IMR-90 (cell line): ENCODE measurements at regions of chr1 and their contacts with region 1.

Region 1: DNA sequence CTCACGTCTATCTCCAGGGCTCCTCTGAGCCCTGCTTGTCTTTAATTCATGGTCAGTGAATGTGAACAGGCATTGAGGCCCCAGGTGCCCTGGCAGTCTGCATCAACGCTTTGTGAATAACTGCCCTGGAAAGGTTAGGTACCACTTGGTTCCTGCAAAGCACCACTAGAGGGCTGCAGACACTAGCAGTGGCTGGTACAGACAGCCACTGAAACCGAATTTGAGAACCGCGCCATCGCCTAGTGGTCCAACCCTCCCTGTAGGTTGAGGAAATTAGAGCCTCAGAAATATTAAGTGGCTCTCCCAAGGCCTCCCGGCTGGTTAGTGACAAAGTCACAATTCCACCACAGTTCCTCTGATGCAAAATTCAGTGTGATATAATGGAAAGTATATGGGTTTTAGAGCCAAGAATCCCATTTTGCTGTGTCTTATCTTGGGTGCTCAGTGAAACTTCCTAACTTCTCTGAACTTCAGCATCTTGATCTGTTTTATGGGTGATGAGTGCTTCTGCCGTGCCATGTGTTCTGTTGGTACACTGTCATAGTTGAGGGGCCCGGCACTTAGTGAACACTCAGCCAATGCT is 46.2 kb upstream of the BCL9 start:
- DNase-seq: peak; percentile 77
- ATAC-seq: peak; percentile 94
- H3K4me3 ChIP-seq: no peak overlapping the region
- H3K27ac ChIP-seq: no peak overlapping the region
- H3K4me1 ChIP-seq: no peaks in the 10 kb centered on the region
- H3K27me3 ChIP-seq: peaks cover 2% of the 10 kb centered on the region
- CTCF ChIP-seq: peak; percentile 99
- POLR2A ChIP-seq: peak; percentile 51
- RAD21 ChIP-seq: peak; percentile 100

Region 2: DNA sequence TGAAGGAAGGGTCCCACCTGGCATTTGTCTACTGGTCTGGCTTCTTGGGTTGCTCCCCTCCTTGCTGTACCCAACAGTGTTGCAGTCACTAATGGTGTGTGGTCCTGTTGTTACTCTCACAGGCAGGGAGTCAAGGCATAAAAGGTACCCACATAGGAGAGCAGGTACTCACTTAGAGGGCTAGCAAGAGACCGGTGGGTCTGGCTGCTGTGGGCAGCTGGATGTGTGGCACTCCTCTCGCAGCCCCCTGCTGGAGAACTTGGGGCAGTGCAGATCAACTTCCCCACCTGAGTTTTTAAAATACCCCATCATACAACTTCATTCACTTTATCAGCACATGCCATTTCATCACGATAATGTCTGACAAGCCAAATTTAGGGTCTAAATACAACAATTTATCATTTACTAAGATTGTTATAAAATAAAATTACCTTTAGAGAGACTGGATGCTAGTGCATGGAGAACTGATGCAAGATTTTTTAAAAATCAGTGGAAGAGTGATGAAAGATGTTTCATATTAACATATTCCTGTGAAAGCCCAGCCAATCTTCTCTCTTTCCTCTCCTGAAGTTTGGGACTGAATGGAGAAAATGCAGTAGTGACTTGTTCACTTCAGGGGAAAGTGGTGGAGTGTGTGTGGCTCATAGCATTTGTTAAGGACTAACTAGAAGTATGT is 132.5 kb after region 1 on chr1:
- CTCF ChIA-PET with region 1: interaction called, 6 read pairs
- POLR2A ChIA-PET with region 1: no interaction called
- dilution Hi-C with region 1: no loop called
- in situ Hi-C with region 1: no loop called
- intact Hi-C with region 1: loop called (anchors 1 kb)
- DNase-seq: peak; percentile 44
- ATAC-seq: peak; percentile 93
- H3K4me3 ChIP-seq: no peak overlapping the region
- H3K27ac ChIP-seq: no peak overlapping the region
- H3K4me1 ChIP-seq: no peaks in the 10 kb centered on the region; the same call in 1 of the 2 replicates
- H3K27me3 ChIP-seq: no peaks in the 10 kb centered on the region
- CTCF ChIP-seq: peak; percentile 87
- POLR2A ChIP-seq: no peak
- RAD21 ChIP-seq: peak; percentile 76

Region 3: DNA sequence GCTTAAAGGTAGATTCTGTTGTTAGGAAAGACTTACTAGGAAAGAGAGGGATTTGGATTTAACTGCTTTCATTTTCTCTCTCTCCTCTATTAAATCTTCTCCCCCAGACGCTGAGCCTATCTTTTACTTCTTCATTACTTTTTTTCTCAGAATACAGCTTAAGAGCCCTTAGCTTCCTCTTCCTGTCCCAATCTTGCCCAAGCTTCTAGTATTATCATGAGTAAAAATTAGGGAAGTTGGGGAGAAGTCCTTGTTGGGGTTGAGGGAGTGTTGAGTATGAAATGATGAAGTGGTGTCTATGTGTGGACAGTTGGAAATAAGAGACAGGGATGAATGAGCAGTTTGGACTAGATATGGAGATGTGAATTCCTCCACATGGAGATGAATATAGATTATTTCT is 140.3 kb after region 1 on chr1:
- CTCF ChIA-PET with region 1: no interaction called
- POLR2A ChIA-PET with region 1: no interaction called
- dilution Hi-C with region 1: no loop called
- in situ Hi-C with region 1: loop called (anchors 5 kb)
- intact Hi-C with region 1: loop called (anchors 1 kb)
- DNase-seq: no peak
- ATAC-seq: no peak
- H3K4me3 ChIP-seq: no peak overlapping the region
- H3K27ac ChIP-seq: no peak overlapping the region
- H3K4me1 ChIP-seq: no peaks in the 10 kb centered on the region
- H3K27me3 ChIP-seq: no peaks in the 10 kb centered on the region
- CTCF ChIP-seq: no peak
- POLR2A ChIP-seq: no peak
- RAD21 ChIP-seq: no peak

Region 4: GRCh38 chr1:147640553-147641165 is 145.6 kb after region 1 on chr1:
- CTCF ChIA-PET with region 1: interaction called, 3 read pairs
- POLR2A ChIA-PET with region 1: no interaction called
- dilution Hi-C with region 1: no loop called
- in situ Hi-C with region 1: loop called (anchors 5 kb)
- intact Hi-C with region 1: loop called (anchors 1 kb)
- DNase-seq: peak; percentile 84
- ATAC-seq: peak; percentile 99
- H3K4me3 ChIP-seq: no peak overlapping the region
- H3K27ac ChIP-seq: no peak overlapping the region
- H3K4me1 ChIP-seq: no peaks in the 10 kb centered on the region
- H3K27me3 ChIP-seq: no peaks in the 10 kb centered on the region
- CTCF ChIP-seq: peak; percentile 94
- POLR2A ChIP-seq: no peak
- RAD21 ChIP-seq: peak; percentile 66

Region 5: GRCh38 chr1:147700042-147701006 is 205.2 kb after region 1 on chr1:
- CTCF ChIA-PET with region 1: no interaction called
- POLR2A ChIA-PET with region 1: no interaction called
- dilution Hi-C with region 1: no loop called
- in situ Hi-C with region 1: loop called (anchors 5 kb)
- intact Hi-C with region 1: loop called (anchors 2 kb)
- DNase-seq: peak; percentile 64
- ATAC-seq: peak; percentile 91
- H3K4me3 ChIP-seq: no peak overlapping the region
- H3K27ac ChIP-seq: no peak overlapping the region
- H3K4me1 ChIP-seq: no peaks in the 10 kb centered on the region
- H3K27me3 ChIP-seq: peaks cover 4% of the 10 kb centered on the region
- CTCF ChIP-seq: peak; percentile 85
- POLR2A ChIP-seq: no peak
- RAD21 ChIP-seq: peak; percentile 72